Posterior vena cava (tissue), 2 donors: ENCODE measurements at regions of chr5 and their contacts with region 1.

Region 1: GRCh38 chr5:109467058-109467457 is 57.3 kb upstream of the PJA2 start:
- DNase-seq: no peak

Region 2: DNA sequence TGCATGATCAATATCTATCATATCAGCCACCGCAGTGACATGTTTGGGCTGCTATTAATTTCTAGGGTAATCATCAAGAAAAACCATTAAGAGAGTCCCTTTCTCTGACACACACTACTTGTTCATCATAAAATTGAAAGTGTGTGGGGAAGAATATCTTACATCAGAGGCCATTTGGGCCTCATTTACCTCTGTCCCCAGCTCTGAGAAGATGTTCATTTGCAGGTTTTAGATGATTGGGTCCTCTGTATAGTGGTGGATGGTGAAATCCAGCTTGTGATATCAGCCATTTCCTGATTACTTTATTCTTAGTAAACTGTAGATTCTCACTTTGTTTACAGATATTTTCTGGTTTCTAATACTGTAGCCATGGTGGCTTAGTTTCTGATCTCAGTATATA is 27.5 kb before region 1 on chr5:
- intact Hi-C with region 1: no loop called
- DNase-seq: no peak

Region 3: GRCh38 chr5:109533751-109534272 is 66.8 kb after region 1 on chr5:
- intact Hi-C with region 1: loop called in 1 of 2 experiments (anchors 2 kb)
- DNase-seq: no peak

Region 4: DNA sequence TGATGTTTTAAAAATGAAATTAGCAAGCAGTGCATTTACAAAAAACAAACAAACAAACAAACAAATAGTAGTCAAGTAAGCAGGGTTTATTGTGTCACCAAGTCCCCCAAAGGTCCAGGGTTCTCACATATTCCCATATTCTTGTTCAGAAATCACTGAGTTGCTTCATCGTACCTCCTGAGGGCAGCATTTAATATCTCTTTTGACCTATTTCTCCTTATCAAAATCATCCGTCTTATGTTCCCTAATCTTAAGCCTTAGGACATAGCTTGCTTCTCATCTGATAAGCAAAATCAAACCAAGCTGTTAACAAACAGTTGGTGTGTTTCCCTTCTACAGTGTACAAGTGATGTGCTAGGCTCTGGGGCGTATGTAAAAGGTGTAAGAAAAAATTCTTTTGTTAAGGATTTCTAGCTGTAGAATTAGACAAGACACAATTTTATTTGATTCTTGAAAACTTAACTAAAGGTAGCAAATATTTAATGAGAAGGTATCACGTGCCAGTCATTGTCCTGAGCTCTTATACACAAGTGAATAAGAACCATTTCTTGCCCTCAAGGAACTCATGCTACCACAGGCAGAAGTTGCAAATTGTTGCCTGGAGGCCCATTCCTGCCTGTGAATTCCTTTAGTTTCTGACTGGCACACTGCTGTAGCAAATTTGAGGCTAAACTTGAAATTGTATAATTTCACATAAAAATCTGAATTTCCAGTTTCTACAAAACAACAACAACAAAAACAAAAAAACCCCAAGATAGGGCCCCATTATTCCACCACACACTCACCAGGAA is 113.4 kb after region 1 on chr5:
- intact Hi-C with region 1: no loop called
- DNase-seq: no peak

Region 5: DNA sequence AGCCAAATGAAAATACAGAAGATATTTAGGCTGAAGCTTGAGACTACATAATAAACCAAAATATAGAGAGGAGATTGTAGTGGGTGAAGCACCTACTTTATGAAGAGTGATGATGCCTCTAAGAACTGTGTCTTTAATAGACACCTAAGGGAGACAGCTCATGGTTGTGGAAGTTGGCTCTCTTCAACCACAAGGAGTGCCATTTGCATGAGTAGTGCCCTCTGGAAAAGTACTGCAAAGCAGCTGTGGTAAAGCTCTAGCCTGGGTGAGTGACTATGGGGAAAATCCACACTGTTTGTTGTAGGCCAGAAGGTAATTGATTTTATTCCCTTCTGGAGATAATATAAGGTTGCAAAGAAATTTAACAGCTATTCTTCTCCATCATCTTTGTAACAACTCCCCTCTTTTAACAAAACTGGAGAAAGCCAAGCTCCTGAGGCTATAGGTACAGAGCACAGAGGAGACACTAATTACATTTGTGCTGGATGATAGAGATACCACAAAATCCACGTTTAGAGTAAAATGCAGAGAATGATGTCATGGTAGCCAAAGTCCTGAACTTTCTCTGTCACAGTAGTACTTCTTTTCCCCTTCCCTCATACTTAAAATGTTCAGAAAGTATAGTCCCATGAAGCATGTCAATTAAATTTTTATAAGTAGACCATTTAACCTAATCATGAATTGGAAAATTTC is 1922.5 kb after region 1 on chr5:
- intact Hi-C with region 1: no loop called
- DNase-seq: no peak